MCF 10A (cell line): ENCODE measurements at regions of chr5 and their contacts with region 1.

Region 1: DNA sequence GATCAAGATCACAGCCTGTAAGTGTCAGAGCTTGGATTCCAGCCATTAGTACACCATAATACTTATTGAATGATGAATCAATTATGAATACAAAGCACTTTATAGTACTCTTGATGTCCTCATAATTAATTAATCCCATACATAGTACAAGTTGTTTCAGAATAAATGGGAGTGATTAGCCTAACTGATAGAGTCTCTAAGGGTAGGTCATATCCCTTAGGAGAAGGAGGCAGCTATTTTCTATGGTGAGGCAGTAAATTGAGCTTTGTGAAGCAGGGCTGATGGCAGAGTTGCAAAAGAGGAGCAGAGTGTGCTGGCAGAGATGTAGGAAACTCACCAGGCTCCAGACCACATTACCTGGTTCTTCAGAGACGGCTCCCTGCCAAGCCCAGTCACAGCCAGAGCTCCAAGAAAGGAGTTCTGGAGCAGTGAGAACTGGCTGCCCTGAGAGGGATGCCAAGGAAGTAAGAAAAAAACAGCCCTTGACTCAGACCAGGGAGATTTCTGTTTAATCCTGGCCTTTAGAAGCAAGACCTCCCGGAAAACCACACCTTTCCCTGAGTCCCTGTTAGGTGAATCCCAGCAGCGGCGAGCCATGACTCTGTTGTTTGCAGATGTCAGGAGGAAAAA is 112.9 kb downstream of the SH3TC2 start:
- DNase-seq: peak; percentile 97
- H3K4me3 Mint-ChIP-seq: no peak overlapping the region
- H3K27ac Mint-ChIP-seq: peak overlapping the region; percentile 92
- H3K4me1 Mint-ChIP-seq: peaks cover 17% of the 10 kb centered on the region
- H3K27me3 Mint-ChIP-seq: no peaks in the 10 kb centered on the region
- CTCF ChIP-seq: no peak

Region 2: GRCh38 chr5:148849461-148849860 is 100.5 kb before region 1 on chr5:
- CTCF ChIA-PET with region 1: no interaction called
- POLR2A ChIA-PET with region 1: no interaction called
- intact Hi-C with region 1: no loop called
- DNase-seq: no peak
- H3K4me3 Mint-ChIP-seq: no peak overlapping the region
- H3K27ac Mint-ChIP-seq: no peak overlapping the region
- H3K4me1 Mint-ChIP-seq: peaks cover 6% of the 10 kb centered on the region
- H3K27me3 Mint-ChIP-seq: no peaks in the 10 kb centered on the region
- CTCF ChIP-seq: no peak

Region 3: DNA sequence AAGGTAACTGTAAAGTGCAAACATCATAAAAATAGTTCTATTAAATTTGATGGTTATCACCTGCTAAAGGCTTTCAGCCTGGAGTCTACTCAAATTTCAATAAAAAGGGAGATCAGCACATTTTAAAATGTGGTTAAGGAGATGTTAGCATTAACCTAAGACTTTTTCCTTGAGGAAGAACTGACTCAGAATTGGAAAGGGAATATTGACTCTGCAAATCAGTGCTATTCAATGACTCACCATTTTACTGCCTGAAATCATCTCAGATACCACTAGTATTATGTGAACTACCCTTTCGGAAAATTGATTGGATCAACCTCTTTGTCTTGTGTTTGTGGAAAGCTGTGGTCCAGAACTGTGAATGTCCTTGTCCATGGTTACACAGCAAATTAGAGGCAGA is 10.3 kb before region 1 on chr5:
- CTCF ChIA-PET with region 1: interaction called, 21 read pairs
- POLR2A ChIA-PET with region 1: interaction called, 20 read pairs
- intact Hi-C with region 1: no loop called
- DNase-seq: peak; percentile 27
- H3K4me3 Mint-ChIP-seq: no peak overlapping the region
- H3K27ac Mint-ChIP-seq: no peak overlapping the region
- H3K4me1 Mint-ChIP-seq: peaks cover 32% of the 10 kb centered on the region
- H3K27me3 Mint-ChIP-seq: no peaks in the 10 kb centered on the region
- CTCF ChIP-seq: no peak

Region 4: GRCh38 chr5:148972958-148973357 is 23.0 kb after region 1 on chr5:
- CTCF ChIA-PET with region 1: interaction called, 9 read pairs
- POLR2A ChIA-PET with region 1: interaction called, 1,127 read pairs
- intact Hi-C with region 1: no loop called
- DNase-seq: peak; percentile 94
- H3K4me3 Mint-ChIP-seq: peak overlapping the region; percentile 28
- H3K27ac Mint-ChIP-seq: peak overlapping the region; percentile 93
- H3K4me1 Mint-ChIP-seq: peaks cover 88% of the 10 kb centered on the region
- H3K27me3 Mint-ChIP-seq: no peaks in the 10 kb centered on the region
- CTCF ChIP-seq: no peak

Region 5: DNA sequence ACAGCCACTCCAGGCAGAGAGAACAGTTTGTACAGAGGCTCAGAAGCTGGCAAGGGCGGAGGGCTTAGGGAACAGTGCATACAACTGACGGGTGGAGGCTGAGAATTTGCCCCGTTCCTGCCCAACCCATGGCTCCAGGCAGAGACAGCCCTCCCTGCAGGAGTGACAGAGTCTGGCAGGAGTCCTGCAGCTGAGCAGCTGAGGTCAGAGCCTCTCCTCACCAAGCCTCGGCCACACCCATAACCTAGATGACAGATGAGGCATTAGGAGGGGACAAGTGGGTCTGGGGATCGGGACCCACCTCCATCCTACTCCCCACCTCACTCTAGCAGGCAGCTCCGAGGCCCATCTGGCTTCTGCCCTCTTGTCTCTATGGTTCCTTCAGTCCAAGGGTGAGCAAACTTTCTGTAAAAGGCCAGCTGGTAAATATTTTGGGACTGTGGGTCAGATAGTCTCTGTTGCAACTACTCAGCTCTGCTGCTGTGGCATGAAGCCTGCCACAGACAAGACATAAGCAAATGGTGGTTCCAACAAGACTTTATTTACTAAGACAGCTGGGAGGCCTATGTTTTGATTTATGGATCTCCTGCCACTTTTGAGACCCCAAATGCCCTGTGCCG is 29.3 kb after region 1 on chr5:
- CTCF ChIA-PET with region 1: interaction called, 9 read pairs
- POLR2A ChIA-PET with region 1: interaction called, 1,127 read pairs
- intact Hi-C with region 1: no loop called
- DNase-seq: peak; percentile 95
- H3K4me3 Mint-ChIP-seq: peak overlapping the region; percentile 59
- H3K27ac Mint-ChIP-seq: peak overlapping the region; percentile 97
- H3K4me1 Mint-ChIP-seq: peaks cover 70% of the 10 kb centered on the region
- H3K27me3 Mint-ChIP-seq: no peaks in the 10 kb centered on the region
- CTCF ChIP-seq: no peak

Region 6: DNA sequence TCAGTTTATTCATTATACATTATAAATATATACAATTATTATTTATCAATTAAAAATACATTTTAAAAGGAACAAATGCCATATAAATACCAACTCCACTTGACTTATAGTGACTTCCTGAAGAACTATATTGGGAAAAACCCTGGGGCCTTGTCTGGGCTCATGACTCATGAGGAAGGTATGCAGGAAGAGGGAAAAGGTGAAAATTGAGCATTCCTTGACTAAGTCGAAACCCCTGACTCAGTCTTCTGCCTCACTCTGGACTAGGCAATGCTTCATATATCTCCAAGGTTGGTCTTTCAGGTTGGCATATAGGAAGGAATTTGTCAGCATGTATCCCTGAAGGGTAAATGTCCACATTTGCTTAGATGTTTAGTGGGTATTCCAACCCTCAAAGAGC is 34.4 kb after region 1 on chr5:
- CTCF ChIA-PET with region 1: interaction called, 9 read pairs
- POLR2A ChIA-PET with region 1: interaction called, 1,127 read pairs
- intact Hi-C with region 1: no loop called
- DNase-seq: peak; percentile 89
- H3K4me3 Mint-ChIP-seq: no peak overlapping the region
- H3K27ac Mint-ChIP-seq: peak overlapping the region; percentile 95
- H3K4me1 Mint-ChIP-seq: peaks cover 68% of the 10 kb centered on the region
- H3K27me3 Mint-ChIP-seq: no peaks in the 10 kb centered on the region
- CTCF ChIP-seq: no peak